Activated naive CD4-positive, alpha-beta T cell treated with anti-CD3 and anti-CD28 coated beads for 36 hours (primary cell): ENCODE measurements at regions of chr1 and their contacts with region 1.

Region 1: GRCh38 chr1:183655562-183656075 is 2.5 kb upstream of the APOBEC4 start:
- DNase-seq: peak; percentile 87
- H3K4me3 Mint-ChIP-seq: peak overlapping the region; percentile 13
- H3K27ac Mint-ChIP-seq: no peak overlapping the region
- H3K4me1 Mint-ChIP-seq: peaks cover 40% of the 10 kb centered on the region
- H3K27me3 Mint-ChIP-seq: no peaks in the 10 kb centered on the region

Region 2: DNA sequence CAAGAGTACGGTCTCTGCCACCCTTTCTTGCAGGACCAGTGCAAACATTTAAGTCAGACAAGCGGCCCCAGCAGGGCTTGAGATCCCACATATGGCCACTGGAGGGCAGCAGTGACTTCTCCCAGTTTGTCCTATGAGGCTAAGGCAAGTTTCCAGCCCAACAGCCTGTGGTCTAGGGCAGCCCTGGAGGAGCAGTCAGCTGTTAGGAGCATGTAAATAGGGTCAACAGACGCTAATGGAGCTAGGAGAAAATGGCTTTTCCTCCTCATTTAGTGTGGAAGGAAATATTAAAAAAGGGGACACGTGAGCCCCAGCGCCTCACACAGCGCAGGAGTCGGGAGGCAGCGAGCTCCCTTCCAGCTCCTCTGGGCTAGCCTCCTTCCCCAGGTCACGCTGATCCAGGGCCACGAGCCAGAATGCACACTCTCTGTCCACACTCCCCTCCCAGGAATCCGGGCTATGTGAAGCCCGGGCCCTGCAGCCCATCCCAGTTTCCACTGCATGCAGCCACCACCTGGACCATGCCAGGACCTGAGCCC is 374.0 kb before region 1 on chr1:
- CTCF ChIA-PET with region 1: interaction called, 3 read pairs
- intact Hi-C with region 1: loop called (anchors 1 kb)
- DNase-seq: peak; percentile 88
- H3K4me3 Mint-ChIP-seq: no peak overlapping the region
- H3K27ac Mint-ChIP-seq: no peak overlapping the region
- H3K4me1 Mint-ChIP-seq: no peaks in the 10 kb centered on the region
- H3K27me3 Mint-ChIP-seq: no peaks in the 10 kb centered on the region

Region 3: DNA sequence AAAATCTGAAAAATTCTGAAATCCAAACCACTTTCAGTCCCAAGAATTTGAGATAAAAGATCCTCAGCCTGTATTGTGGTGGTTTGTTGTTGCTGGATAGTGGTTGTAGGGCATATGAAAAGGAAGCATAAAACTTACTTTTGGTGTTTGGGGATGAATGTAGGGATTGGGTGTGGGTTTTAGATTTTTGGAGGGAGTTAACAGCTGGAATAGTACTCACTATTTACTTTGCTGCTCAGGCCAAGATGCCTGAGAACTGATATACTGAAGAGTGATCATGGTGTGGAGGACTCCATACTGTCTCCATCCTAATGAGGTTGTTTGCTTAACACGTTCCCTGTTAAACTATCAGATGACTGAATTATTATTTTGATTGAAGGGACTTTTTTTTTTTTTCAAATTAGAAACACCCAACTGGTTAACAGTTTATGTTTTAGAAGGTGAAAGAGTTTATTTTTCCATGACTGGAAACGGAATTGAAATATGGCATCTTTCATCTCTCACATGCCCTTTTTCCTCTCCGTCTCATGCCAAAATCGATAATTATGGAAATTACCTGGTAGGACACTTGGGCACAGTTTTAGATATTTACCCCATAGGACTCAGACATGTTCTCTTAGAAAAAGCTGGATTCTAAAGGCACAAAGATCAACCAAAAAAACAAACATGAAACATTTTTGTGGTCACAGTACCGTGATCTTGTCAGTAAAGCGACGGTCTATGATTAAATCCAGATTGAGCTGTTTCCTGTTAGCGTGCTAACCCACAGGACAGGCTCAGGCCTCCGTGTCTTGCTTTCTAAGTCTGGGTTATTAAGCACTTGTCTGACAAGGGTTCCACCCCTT is 186.6 kb after region 1 on chr1:
- CTCF ChIA-PET with region 1: no interaction called
- intact Hi-C with region 1: loop called (anchors 2 kb)
- DNase-seq: peak; percentile 58
- H3K4me3 Mint-ChIP-seq: peak overlapping the region; percentile 56
- H3K27ac Mint-ChIP-seq: peak overlapping the region; percentile 88
- H3K4me1 Mint-ChIP-seq: peaks cover 28% of the 10 kb centered on the region
- H3K27me3 Mint-ChIP-seq: no peaks in the 10 kb centered on the region

Region 4: DNA sequence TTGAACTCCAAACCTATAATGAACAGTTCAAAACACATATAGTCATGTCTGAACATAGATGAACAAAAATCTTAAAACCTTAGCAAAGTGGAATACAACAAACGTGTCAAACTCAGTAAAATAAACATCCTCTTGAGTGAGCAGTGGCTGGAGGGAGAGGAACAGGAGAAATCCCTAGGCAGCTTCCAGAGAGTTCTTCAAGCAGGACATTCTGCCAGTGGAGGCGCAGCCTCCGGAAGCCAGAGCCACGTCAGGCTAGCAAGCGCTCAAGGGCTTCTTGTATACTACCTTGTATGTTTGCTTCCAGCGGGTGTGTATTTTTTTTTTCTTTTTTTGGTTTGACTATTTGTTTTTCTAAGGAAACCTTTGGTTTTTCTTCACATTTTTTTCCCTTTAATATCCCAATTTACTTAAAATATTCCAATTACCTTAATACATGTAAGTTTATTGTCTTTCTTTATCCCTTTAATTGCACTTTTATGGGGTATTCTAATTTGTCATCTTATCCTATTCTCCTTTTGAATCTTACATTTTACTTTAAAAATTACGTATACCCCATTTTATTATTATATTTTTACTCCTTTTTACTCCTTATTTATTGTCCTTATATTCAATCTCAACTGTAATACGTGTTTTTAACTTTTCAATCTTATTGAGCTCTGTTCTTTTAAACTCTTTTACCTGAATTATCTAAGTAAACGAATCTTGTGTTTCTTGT is 339.9 kb after region 1 on chr1:
- CTCF ChIA-PET with region 1: no interaction called
- intact Hi-C with region 1: no loop called
- DNase-seq: no peak
- H3K4me3 Mint-ChIP-seq: no peak overlapping the region
- H3K27ac Mint-ChIP-seq: no peak overlapping the region
- H3K4me1 Mint-ChIP-seq: peaks cover 8% of the 10 kb centered on the region
- H3K27me3 Mint-ChIP-seq: peaks cover 1% of the 10 kb centered on the region

Region 5: GRCh38 chr1:184051485-184052193 is 396.0 kb after region 1 on chr1 and contains the start of gene TSEN15:
- CTCF ChIA-PET with region 1: no interaction called
- intact Hi-C with region 1: loop called (anchors 5 kb)
- DNase-seq: peak; percentile 84
- H3K4me3 Mint-ChIP-seq: peak within 1 kb of the TSS; percentile 96
- H3K27ac Mint-ChIP-seq: peak within 1 kb of the TSS; percentile 96
- H3K4me1 Mint-ChIP-seq: peaks cover 34% of the 10 kb centered on the region
- H3K27me3 Mint-ChIP-seq: peaks cover 5% of the 10 kb centered on the region
- total RNA-seq, gene TSEN15: 52.6 to 57.6 TPM

Region 6: DNA sequence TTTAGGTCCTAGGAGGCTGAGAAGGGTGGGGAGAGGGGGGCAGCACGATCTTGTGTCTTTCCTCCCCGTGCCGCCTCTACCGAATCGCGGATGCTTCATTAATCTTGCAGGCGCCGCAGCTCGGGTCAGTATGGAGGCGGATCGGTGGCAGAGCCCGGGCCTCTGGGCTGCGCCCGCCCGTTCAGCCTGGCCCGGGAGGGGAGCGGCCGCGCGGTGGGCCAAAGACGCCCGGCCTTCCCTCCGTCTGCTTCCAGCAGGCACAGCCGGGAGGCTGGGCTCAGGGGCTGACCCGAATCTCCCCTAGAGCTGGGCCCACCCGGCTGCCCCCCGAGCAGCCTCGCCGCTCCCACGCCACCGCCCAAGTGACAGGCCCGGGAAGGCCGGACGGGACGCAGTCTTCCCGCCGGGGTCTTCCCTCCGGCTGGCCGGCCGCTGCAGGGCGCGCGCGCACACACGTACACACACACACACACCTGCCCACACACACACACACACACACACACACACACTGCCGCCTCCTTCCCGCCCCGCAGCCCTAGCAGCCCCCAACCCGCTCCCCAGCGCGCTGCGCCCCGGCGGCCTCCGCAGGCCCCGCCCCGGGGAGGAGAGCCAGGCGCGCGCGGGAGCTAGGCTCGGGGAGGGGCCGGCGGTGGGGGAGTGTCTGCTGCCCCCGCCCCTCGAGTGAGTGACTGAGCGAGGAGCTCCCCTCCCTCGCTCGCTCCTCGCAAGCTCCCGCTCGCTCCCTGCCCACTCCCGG is 730.9 kb after region 1 on chr1 and contains the start of gene C1orf21:
- CTCF ChIA-PET with region 1: interaction called, 5 read pairs
- intact Hi-C with region 1: loop called (anchors 10 kb)
- DNase-seq: peak; percentile 80
- H3K4me3 Mint-ChIP-seq: peak within 1 kb of the TSS; percentile 78
- H3K27ac Mint-ChIP-seq: no peak within 1 kb of the TSS
- H3K4me1 Mint-ChIP-seq: peaks cover 14% of the 10 kb centered on the region
- H3K27me3 Mint-ChIP-seq: peaks cover 59% of the 10 kb centered on the region
- total RNA-seq, gene C1orf21: 1.2 to 1.4 TPM

Region 7: DNA sequence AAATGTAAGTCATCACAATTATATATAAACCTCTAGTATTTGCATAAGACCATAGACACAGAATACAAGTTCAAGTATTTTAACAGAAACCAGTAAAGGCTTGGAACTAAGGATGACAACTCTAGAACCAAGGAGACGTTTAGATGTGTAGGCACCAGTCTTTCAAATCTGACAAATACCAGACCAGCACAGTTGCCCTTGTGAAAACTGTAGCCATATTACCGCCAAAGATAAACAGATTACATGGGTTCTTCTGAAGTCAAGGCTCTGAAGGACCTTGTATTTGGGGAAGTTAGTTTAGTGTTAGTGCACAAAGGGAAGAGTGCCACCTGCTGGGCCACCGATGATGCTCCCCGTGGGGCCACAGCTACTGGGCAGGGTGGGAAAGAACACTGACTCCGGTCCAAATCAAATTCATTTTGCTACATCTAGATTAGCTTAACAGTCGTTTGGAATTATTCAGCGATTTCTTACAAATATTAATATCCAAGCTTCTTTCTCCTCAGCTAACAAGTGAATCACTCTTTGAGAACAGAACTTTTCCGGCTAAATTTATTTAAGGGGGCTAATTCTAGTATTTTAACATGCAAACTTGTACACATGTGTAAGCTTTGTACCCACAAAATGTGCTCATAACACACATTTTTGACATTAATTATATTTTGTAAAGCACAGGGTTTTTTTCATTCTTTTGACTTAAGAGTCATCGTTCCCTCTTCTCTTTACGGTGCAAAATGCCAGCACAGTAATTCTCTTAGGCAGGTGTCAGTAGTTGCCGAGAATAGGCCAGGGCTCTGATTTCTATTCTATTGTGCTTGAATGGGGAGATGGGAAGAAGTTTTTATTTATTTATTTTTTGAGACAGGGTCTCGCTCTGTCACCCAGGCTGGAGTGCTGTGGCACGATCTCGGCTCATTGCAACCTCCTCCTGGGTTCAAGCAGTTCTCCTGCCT is 1326.7 kb after region 1 on chr1:
- CTCF ChIA-PET with region 1: no interaction called
- intact Hi-C with region 1: loop called (anchors 5 kb)
- DNase-seq: peak; percentile 84
- H3K4me3 Mint-ChIP-seq: no peak overlapping the region
- H3K27ac Mint-ChIP-seq: no peak overlapping the region
- H3K4me1 Mint-ChIP-seq: no peaks in the 10 kb centered on the region
- H3K27me3 Mint-ChIP-seq: peaks cover 17% of the 10 kb centered on the region